ENCODE measurements at regions of chr9 and their contacts with region 1.

Region 1: DNA sequence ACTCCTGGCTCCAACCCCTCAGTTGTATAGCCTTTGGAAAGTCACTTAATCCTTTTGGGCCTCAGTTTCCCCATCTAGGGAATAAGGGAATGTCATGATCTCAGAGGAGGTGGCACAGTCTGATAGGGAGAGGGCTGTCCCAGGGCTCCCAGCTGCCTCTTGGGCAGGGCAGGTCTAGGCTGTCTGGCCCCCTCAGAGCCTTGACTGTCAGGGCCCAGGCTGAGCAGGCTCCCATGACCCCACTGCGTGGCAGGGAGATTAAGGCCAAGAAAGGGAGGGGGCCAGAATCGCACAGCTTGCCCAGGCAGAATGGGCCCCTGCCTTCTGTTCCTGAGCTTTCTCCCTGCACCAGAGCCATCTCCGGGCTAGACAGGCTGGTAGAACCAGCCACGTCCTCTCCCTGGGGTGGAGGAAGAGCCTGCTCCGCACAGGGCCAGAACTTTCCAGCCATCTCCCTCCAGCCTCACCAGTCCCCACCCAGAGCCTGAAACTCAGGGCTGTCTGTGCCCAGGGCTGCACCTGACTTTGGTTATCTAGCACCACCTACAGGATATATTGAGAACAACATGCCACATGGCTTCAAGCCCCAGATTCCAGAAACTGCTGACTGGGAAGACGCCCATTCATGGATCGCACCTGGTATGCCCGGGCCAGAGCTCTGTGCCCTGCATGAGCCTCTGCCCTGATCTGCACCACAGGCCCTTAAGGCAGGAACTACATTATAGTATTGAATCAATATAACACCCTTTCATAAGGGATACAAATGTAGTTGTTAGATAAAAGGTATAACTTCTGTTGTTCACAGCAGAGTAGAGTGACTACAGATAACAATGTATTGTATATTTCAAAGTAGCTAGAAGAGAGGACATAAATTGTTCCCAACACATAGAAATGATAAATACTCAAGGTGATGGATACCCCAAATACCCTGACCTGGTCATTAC is 32.0 kb downstream of the NAIF1 start:
- DNase-seq: peak; percentile 29 to 89 (median 67)
- ATAC-seq: peak; percentile 48
- H3K4me3 ChIP-seq: no peak overlapping the region
- H3K4me3 Mint-ChIP-seq: no peak overlapping the region
- H3K27ac ChIP-seq: no peak overlapping the region
- H3K27ac Mint-ChIP-seq: peak overlapping the region; percentile 89
- H3K4me1 ChIP-seq: peaks cover 44% of the 10 kb centered on the region
- H3K4me1 Mint-ChIP-seq: peaks cover 37% of the 10 kb centered on the region
- H3K27me3 ChIP-seq: no peaks in the 10 kb centered on the region
- H3K27me3 Mint-ChIP-seq: no peaks in the 10 kb centered on the region
- CTCF ChIP-seq: peak; percentile 86

Region 2: DNA sequence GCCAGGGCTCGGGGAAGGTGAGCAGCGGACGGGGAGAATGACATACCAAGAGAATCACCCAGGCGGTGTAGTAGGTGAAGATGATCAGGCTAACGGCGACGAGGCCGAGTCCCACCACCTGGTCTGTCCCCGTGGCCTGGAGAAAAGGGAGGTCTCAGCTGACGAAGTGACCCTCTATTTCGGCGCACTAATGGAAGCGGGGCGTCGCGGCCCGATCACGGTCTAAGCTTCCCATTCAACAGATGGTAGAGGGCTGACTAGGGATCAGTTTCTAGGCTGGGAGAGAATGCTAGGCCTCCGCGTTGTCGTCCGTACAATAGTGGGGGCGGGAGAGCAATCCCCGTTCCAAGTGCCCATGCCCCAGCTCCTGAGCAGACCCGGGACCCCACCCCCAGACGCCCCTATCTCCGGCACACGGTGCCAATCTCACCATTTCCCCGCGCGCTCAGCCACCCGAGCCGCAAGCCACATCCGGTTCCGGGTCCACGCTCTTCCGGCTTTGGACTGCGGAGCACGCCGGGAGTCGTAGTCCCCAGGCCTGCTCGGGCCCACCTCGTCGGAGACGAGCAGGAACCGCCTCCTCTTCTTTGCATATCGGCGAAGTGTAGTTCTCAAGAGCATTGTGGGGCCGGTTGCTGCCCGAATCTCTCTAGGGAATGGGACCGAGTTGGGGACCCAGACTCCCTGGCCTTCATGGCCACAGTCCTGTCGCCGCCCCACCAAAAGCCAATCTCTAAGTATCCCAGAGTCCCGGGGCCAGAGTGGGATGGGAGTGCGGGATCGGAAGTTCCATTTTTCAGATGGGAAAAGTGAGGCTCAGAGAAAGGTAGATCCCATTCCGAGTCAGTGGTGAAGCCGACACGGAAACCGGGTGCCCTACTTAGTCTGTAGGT is 97.5 kb before region 1 on chr9 and contains the start of gene DPM2:
- CTCF ChIA-PET with region 1: interaction called, 678 read pairs
- POLR2A ChIA-PET with region 1: interaction called, 11 read pairs
- intact Hi-C with region 1: no loop called
- DNase-seq: peak; percentile 67 to 94 (median 87)
- ATAC-seq: peak; percentile 87
- H3K4me3 ChIP-seq: peak within 1 kb of the TSS; percentile 70 to 83
- H3K4me3 Mint-ChIP-seq: peak within 1 kb of the TSS; percentile 87
- H3K27ac ChIP-seq: peak within 1 kb of the TSS; percentile 55 to 84
- H3K27ac Mint-ChIP-seq: peak within 1 kb of the TSS; percentile 92
- H3K4me1 ChIP-seq: peaks cover 26% of the 10 kb centered on the region
- H3K4me1 Mint-ChIP-seq: peaks cover 44% of the 10 kb centered on the region
- H3K27me3 ChIP-seq: no peaks in the 10 kb centered on the region
- H3K27me3 Mint-ChIP-seq: no peaks in the 10 kb centered on the region
- CTCF ChIP-seq: no peak
- total RNA-seq, gene DPM2: 40.2 to 42.7 TPM

Region 3: GRCh38 chr9:127963359-127964064 is 71.6 kb before region 1 on chr9:
- CTCF ChIA-PET with region 1: interaction called, 678 read pairs
- POLR2A ChIA-PET with region 1: interaction called, 467 read pairs
- intact Hi-C with region 1: no loop called
- DNase-seq: peak in 1 of 9 experiments; percentile 50
- ATAC-seq: peak; percentile 12
- H3K4me3 ChIP-seq: peak overlapping the region in 1 of 2 experiments; percentile 42
- H3K4me3 Mint-ChIP-seq: peak overlapping the region; percentile 88
- H3K27ac ChIP-seq: peak overlapping the region; percentile 25 to 49
- H3K27ac Mint-ChIP-seq: peak overlapping the region; percentile 99
- H3K4me1 ChIP-seq: peaks cover 100% of the 10 kb centered on the region
- H3K4me1 Mint-ChIP-seq: peaks cover 96% of the 10 kb centered on the region
- H3K27me3 ChIP-seq: no peaks in the 10 kb centered on the region
- H3K27me3 Mint-ChIP-seq: no peaks in the 10 kb centered on the region
- CTCF ChIP-seq: no peak

Region 4: GRCh38 chr9:128007566-128008138 is 27.4 kb before region 1 on chr9:
- CTCF ChIA-PET with region 1: interaction called, 21 read pairs
- POLR2A ChIA-PET with region 1: interaction called, 8 read pairs
- intact Hi-C with region 1: loop called in 1 of 2 experiments (anchors 1 kb)
- DNase-seq: peak; percentile 82 to 98 (median 92)
- ATAC-seq: peak; percentile 88
- H3K4me3 ChIP-seq: peak overlapping the region in 1 of 2 experiments; percentile 46
- H3K4me3 Mint-ChIP-seq: peak overlapping the region; percentile 73
- H3K27ac ChIP-seq: peak overlapping the region; percentile 63 to 68
- H3K27ac Mint-ChIP-seq: peak overlapping the region; percentile 96
- H3K4me1 ChIP-seq: peaks cover 76% of the 10 kb centered on the region
- H3K4me1 Mint-ChIP-seq: peaks cover 75% of the 10 kb centered on the region
- H3K27me3 ChIP-seq: no peaks in the 10 kb centered on the region
- H3K27me3 Mint-ChIP-seq: no peaks in the 10 kb centered on the region
- CTCF ChIP-seq: no peak

Region 5: GRCh38 chr9:128081056-128081455 is 46.0 kb after region 1 on chr9:
- CTCF ChIA-PET with region 1: interaction called, 16 read pairs
- POLR2A ChIA-PET with region 1: no interaction called
- intact Hi-C with region 1: loop called in 1 of 2 experiments (anchors 1 kb)
- DNase-seq: no peak
- ATAC-seq: no peak
- H3K4me3 ChIP-seq: no peak overlapping the region
- H3K4me3 Mint-ChIP-seq: no peak overlapping the region
- H3K27ac ChIP-seq: peak overlapping the region in 1 of 2 experiments; percentile 19
- H3K27ac Mint-ChIP-seq: peak overlapping the region; percentile 46
- H3K4me1 ChIP-seq: peaks cover 19% of the 10 kb centered on the region
- H3K4me1 Mint-ChIP-seq: peaks cover 49% of the 10 kb centered on the region
- H3K27me3 ChIP-seq: no peaks in the 10 kb centered on the region
- H3K27me3 Mint-ChIP-seq: no peaks in the 10 kb centered on the region
- CTCF ChIP-seq: no peak

Region 6: GRCh38 chr9:128103589-128103962 is 68.5 kb after region 1 on chr9:
- CTCF ChIA-PET with region 1: interaction called, 12 read pairs
- POLR2A ChIA-PET with region 1: no interaction called
- intact Hi-C with region 1: no loop called
- DNase-seq: peak in 7 of 9 experiments; percentile 16 to 70 (median 51)
- ATAC-seq: peak; percentile 63
- H3K4me3 ChIP-seq: no peak overlapping the region
- H3K4me3 Mint-ChIP-seq: no peak overlapping the region
- H3K27ac ChIP-seq: peak overlapping the region in 1 of 2 experiments; percentile 6
- H3K27ac Mint-ChIP-seq: peak overlapping the region; percentile 67
- H3K4me1 ChIP-seq: peaks cover 68% of the 10 kb centered on the region
- H3K4me1 Mint-ChIP-seq: peaks cover 55% of the 10 kb centered on the region
- H3K27me3 ChIP-seq: no peaks in the 10 kb centered on the region
- H3K27me3 Mint-ChIP-seq: no peaks in the 10 kb centered on the region
- CTCF ChIP-seq: peak; percentile 29

Measured in CD8-positive, alpha-beta T cell (primary cell).